Activated CD4-positive, alpha-beta T cell treated with anti-CD3 and anti-CD28 coated beads for 36 hours (primary cell): ENCODE measurements at regions of chr2 and their contacts with region 1.

Region 1: GRCh38 chr2:233353769-233354499 is at the start of gene DGKD:
- DNase-seq: peak; percentile 88
- ATAC-seq: peak; percentile 62
- H3K4me3 Mint-ChIP-seq: peak within 1 kb of the TSS; percentile 85
- H3K27ac Mint-ChIP-seq: peak within 1 kb of the TSS; percentile 80
- H3K4me1 Mint-ChIP-seq: peaks cover 63% of the 10 kb centered on the region
- H3K27me3 Mint-ChIP-seq: no peaks in the 10 kb centered on the region
- total RNA-seq, gene DGKD: 57.0 to 62.6 TPM

Region 2: DNA sequence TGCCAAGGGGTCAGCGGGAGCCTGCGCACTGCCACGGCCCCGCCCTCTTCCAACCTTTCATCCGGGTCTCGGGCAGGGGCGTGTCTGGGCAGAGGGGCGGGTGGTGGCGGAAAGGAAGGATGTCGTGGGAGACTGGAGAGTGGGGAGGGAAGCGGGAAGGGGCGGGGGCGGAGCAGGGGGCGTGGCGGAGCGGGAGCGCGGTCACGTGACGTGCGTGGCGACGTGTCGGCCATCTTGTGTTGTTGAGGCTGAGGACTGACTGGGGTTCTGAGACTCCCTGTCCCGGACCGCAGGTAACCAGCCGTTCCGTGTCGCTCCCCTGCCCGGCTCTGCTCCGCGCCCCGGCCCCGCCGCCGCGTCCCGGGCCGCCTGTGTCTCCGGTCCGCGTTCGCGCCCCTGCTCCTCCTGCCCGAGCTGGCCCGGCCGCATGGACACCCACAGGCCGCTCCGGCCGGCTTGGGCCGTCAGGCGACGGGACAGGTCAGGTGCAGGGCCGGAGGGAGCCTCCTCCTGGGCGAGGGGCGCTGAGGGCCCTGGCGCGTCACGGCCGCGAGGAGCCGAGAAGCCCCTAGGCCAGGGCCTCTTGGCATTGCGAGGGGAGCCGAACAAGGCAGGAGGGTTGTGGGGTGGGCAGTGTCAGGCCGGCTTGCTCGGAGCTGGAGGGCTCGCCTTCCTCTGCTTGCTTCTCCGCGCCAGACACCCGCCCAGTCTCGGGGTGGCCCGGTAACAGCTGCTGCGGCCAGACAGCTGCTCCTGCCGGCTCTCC is 656.7 kb before region 1 on chr2 and contains the start of gene GIGYF2:
- CTCF ChIA-PET with region 1: no interaction called
- POLR2A ChIA-PET with region 1: no interaction called
- intact Hi-C with region 1: loop called in 1 of 2 experiments (anchors 1 kb)
- DNase-seq: peak; percentile 98
- ATAC-seq: peak; percentile 92
- H3K4me3 Mint-ChIP-seq: peak within 1 kb of the TSS; percentile 99
- H3K27ac Mint-ChIP-seq: peak within 1 kb of the TSS; percentile 87
- H3K4me1 Mint-ChIP-seq: peaks cover 36% of the 10 kb centered on the region
- H3K27me3 Mint-ChIP-seq: no peaks in the 10 kb centered on the region
- total RNA-seq, gene GIGYF2: 51.1 to 51.9 TPM

Region 3: DNA sequence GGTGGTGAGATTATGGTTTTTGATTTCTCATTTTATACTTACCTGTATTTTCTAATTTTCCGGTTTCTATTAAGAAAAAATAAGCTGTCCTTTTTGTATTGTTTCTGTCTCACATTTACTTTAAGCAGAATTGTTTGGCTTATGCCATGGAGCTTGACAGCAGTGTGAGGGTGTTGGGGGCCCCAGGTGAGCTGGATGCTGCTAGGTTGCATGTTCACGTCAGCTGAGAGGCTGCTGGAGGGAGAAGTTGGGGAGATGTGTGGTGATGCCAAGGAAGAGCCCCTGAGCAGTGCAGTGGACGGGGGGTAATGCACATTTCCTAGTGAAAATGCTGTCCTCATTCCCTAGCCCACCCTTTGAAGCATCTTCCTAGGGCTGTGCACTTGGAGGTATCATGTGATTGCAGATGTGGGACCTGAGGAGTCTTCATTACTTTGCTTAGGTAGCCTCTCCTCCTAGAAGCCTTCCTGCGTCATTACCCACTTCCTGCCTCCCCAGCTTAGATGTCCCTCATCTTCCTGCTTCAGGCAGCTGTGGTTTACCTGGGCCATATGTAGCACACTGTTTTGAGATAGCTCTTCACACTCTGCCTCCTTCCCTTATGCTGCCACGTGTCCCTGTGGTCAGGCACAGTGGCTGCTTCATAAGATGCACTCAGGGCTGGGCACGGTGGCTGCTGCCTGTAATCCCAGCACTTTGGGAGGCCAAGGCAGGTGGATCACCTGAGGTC is 86.3 kb before region 1 on chr2:
- CTCF ChIA-PET with region 1: no interaction called
- POLR2A ChIA-PET with region 1: no interaction called
- intact Hi-C with region 1: loop called in 1 of 2 experiments (anchors 5 kb)
- DNase-seq: peak; percentile 85
- ATAC-seq: peak; percentile 95
- H3K4me3 Mint-ChIP-seq: peak overlapping the region; percentile 53
- H3K27ac Mint-ChIP-seq: peak overlapping the region; percentile 98
- H3K4me1 Mint-ChIP-seq: peaks cover 66% of the 10 kb centered on the region
- H3K27me3 Mint-ChIP-seq: no peaks in the 10 kb centered on the region

Region 4: GRCh38 chr2:233418761-233419625 is 65.1 kb after region 1 on chr2:
- CTCF ChIA-PET with region 1: interaction called, 3 read pairs
- POLR2A ChIA-PET with region 1: no interaction called
- intact Hi-C with region 1: loop called in 1 of 2 experiments (anchors 2 kb)
- DNase-seq: peak; percentile 72
- ATAC-seq: peak; percentile 52
- H3K4me3 Mint-ChIP-seq: peak overlapping the region; percentile 63
- H3K27ac Mint-ChIP-seq: peak overlapping the region; percentile 81
- H3K4me1 Mint-ChIP-seq: peaks cover 97% of the 10 kb centered on the region
- H3K27me3 Mint-ChIP-seq: no peaks in the 10 kb centered on the region

Region 5: DNA sequence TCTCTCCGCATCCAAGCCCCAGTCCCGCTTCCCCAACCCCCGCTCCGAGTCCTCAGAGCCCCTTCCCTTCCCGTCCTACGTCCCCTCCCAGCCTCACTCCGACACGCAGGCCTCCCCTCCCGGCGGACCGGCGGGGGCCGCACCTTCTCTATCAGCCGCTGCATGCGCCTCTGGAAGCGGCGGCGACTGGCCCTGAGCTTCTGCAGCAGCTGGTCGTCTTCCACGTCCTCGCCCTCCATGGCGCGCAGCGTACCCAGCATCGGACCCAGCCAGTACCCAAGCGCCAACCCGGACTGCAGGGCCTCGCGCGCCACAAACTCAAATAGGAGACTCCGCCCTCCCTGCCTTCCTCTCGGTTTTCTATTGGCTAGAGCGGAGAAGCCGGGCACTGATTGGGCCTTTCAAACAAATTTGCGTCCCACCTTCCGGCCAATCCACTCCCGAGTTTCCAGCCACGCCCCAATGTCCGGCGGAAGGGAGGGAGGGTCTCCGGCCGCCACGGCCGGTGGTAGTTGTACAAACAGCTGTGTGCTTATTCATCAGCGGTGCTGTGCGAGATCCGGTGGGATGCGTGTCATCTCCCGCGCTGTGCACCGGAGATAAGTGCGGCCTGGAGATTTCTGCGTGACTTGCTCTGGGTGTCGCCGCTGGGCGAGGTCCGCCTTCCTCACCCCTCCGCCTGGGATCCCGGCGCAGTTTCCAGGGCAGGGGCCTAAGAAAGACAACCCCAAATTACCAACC is 500.5 kb after region 1 on chr2 and contains the start of gene HJURP:
- CTCF ChIA-PET with region 1: no interaction called
- POLR2A ChIA-PET with region 1: no interaction called
- intact Hi-C with region 1: loop called in 1 of 2 experiments (anchors 1 kb)
- DNase-seq: peak; percentile 96
- ATAC-seq: peak; percentile 95
- H3K4me3 Mint-ChIP-seq: peak within 1 kb of the TSS; percentile 97
- H3K27ac Mint-ChIP-seq: peak within 1 kb of the TSS; percentile 98
- H3K4me1 Mint-ChIP-seq: peaks cover 26% of the 10 kb centered on the region
- H3K27me3 Mint-ChIP-seq: no peaks in the 10 kb centered on the region
- total RNA-seq, gene HJURP: 94.6 to 111 TPM